A673 (cell line): ENCODE measurements at regions of chr12 and their contacts with region 1.

Region 1: DNA sequence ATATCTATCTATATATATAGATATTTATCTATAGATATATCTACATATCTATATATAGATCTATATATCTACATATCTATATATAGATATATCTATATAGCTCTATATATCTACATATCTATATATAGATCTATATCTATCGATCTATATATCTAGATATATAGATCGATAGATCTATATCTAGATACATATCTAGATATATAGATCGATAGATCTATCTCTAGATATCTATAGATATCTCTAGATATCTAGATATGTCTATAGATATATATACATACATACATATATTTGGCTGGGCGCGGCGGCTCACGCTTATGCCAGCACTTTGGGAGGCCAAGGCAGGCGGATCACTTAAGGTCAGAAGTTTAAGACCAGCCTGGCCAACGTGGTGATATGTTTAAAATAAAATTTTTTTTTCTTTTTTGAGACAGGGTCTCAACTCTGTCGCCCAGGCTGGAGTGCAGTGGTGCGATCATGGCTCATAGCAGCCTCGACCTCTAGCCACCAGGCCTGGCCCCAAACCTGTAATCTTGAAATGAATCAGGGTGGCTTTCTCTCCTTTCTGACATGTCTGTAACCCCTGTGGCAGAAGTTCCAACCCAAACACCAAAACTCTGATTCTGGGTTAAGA is 18.1 kb downstream of the ARPC3 start:
- DNase-seq: no peak
- H3K4me3 ChIP-seq: peak overlapping the region; percentile 57
- H3K27ac ChIP-seq: no peak overlapping the region
- H3K4me1 ChIP-seq: no peaks in the 10 kb centered on the region
- H3K27me3 ChIP-seq: no peaks in the 10 kb centered on the region
- CTCF ChIP-seq: no peak

Region 2: GRCh38 chr12:110114528-110114937 is 317.5 kb before region 1 on chr12:
- CTCF ChIA-PET with region 1: interaction called, 11 read pairs
- POLR2A ChIA-PET with region 1: no interaction called
- intact Hi-C with region 1: no loop called
- DNase-seq: no peak
- H3K4me3 ChIP-seq: no peak overlapping the region
- H3K27ac ChIP-seq: no peak overlapping the region
- H3K4me1 ChIP-seq: no peaks in the 10 kb centered on the region
- H3K27me3 ChIP-seq: no peaks in the 10 kb centered on the region
- CTCF ChIP-seq: no peak

Region 3: DNA sequence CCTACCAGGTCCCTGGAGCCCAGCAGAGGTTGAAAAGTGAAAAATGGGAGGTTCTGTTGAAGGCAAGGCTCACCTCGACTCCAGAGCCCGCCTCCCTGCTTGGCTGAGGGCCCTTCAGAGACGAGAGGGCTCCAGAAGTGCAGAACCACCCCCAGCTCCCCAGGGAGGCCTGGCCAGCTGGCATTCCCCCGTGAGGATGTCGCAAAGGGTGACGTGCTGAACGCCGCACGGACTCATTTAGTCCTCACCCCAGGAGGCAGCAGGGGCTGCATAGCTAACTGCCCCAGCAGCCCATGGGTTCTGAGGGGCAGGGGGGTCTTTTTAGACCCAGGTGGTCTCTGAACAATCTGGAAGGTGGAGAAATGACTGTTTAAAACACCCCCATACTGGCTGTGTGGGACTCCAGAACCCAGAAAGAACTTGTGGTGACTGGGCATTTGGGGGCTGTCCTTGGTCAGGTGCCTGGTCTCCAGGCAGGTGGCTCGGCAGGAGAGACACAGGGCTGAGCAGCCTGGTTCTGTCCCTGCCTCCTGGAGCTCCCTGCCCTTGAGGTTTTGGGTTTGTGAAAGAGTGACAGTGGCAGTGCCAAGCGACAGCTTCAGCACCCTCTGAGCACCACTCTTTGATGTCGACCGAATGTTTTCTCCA is 60.5 kb before region 1 on chr12:
- CTCF ChIA-PET with region 1: no interaction called
- POLR2A ChIA-PET with region 1: interaction called, 12 read pairs
- intact Hi-C with region 1: no loop called
- DNase-seq: peak; percentile 70
- H3K4me3 ChIP-seq: no peak overlapping the region
- H3K27ac ChIP-seq: peak overlapping the region; percentile 74
- H3K4me1 ChIP-seq: peaks cover 13% of the 10 kb centered on the region
- H3K27me3 ChIP-seq: no peaks in the 10 kb centered on the region
- CTCF ChIP-seq: no peak

Region 4: GRCh38 chr12:110444455-110444854 is 12.4 kb after region 1 on chr12:
- CTCF ChIA-PET with region 1: interaction called, 22 read pairs
- POLR2A ChIA-PET with region 1: no interaction called
- intact Hi-C with region 1: no loop called
- DNase-seq: no peak
- H3K4me3 ChIP-seq: no peak overlapping the region
- H3K27ac ChIP-seq: no peak overlapping the region
- H3K4me1 ChIP-seq: no peaks in the 10 kb centered on the region
- H3K27me3 ChIP-seq: no peaks in the 10 kb centered on the region
- CTCF ChIP-seq: no peak